Activated CD8-positive, alpha-beta T cell treated with anti-CD3 and anti-CD28 coated beads, Interleukin-2, amount 10 ng/mL, durations not matched to agents 7 days and 5 days (primary cell): ENCODE measurements at regions of chr11 and their contacts with region 1.

Region 1: DNA sequence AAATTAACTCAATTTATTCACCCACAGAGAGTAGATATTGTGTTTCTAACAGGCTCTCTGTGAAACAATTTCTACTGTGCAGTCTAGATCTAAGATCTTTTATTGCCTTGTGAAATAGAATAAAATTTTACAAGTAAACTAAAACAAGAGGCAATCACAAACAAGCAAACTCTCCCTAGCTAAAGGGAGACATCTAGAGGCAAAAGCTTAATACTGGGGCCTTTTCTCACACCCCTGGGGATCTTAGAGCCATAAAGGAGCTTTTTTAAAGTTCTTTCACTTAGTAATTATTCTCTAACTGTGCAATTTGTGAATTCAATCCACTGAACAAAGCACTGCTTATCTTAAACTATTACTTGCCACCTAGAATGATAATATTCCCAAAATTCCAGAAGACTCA is 19.7 kb downstream of the ALG9 start:
- DNase-seq: no peak
- ATAC-seq: no peak
- H3K4me3 Mint-ChIP-seq: no peak overlapping the region
- H3K27ac Mint-ChIP-seq: no peak overlapping the region
- H3K4me1 Mint-ChIP-seq: no peaks in the 10 kb centered on the region
- H3K27me3 Mint-ChIP-seq: no peaks in the 10 kb centered on the region

Region 2: DNA sequence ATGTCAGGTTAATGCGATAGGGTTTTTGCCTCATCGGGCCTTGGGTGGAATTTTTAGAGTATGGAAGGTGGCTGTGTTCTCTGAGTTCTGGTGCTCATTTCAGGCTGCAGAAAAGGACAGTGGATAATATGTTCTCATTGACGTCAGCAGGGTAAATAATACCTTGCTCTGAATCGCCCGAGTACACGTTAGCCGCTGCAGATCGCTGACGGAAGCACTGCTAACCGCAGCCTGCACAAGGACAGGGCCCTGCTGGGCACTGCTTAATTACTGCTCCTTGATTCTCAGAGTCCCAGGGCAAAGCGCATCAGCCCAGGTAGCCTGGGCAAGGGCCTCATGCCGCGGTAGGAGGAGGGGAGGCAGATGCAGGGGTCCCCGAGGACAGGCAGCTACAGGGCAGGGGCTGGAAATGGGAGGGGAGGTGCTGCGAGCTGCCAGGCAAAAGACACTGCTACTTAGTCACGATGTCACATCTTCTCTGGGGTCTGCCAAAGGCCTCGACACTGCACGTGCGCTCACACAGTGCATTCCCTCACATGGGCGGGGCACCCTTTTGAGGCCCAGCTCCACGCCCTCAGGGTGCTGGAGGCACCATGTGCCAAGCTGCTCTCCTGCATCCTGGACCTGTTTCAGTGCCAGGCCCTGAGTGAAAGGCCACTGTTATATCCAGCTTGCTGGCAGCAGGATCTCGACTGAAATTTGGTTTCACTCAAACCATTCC is 120.6 kb before region 1 on chr11:
- CTCF ChIA-PET with region 1: no interaction called
- POLR2A ChIA-PET with region 1: no interaction called
- DNase-seq: no peak
- ATAC-seq: no peak
- H3K4me3 Mint-ChIP-seq: no peak overlapping the region
- H3K27ac Mint-ChIP-seq: no peak overlapping the region
- H3K4me1 Mint-ChIP-seq: no peaks in the 10 kb centered on the region
- H3K27me3 Mint-ChIP-seq: no peaks in the 10 kb centered on the region

Region 3: GRCh38 chr11:111833524-111833923 is 18.1 kb before region 1 on chr11:
- CTCF ChIA-PET with region 1: no interaction called
- POLR2A ChIA-PET with region 1: no interaction called
- DNase-seq: no peak
- ATAC-seq: no peak
- H3K4me3 Mint-ChIP-seq: no peak overlapping the region
- H3K27ac Mint-ChIP-seq: no peak overlapping the region
- H3K4me1 Mint-ChIP-seq: peaks cover 17% of the 10 kb centered on the region
- H3K27me3 Mint-ChIP-seq: no peaks in the 10 kb centered on the region

Region 4: GRCh38 chr11:111870886-111871692 is 19.5 kb after region 1 on chr11 and contains the start of gene ALG9:
- CTCF ChIA-PET with region 1: interaction called, 13 read pairs
- POLR2A ChIA-PET with region 1: interaction called, 3 read pairs
- DNase-seq: peak; percentile 91
- ATAC-seq: peak; percentile 93
- H3K4me3 Mint-ChIP-seq: peak within 1 kb of the TSS; percentile 89
- H3K27ac Mint-ChIP-seq: peak within 1 kb of the TSS; percentile 90
- H3K4me1 Mint-ChIP-seq: peaks cover 23% of the 10 kb centered on the region
- H3K27me3 Mint-ChIP-seq: no peaks in the 10 kb centered on the region
- total RNA-seq, gene ALG9: 29.2 to 31.1 TPM

Region 5: DNA sequence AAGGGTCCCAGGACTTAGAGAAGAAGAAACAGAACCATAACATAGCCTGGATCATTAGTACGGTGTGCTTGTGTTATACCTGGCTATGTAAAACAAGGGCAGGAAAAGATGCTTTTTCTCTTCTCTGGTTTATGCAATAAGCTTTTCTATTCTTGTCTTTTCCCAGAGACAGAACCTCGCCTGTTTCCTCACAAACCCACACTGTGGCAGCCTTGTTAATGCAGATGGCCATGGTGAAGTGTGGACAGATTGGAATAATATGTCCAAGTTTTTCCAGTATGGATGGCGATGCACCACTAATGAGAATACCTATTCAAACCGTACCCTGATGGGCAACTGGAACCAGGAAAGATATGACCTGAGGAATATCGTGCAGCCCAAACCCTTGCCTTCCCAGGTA is 30.6 kb after region 1 on chr11:
- CTCF ChIA-PET with region 1: no interaction called
- POLR2A ChIA-PET with region 1: no interaction called
- DNase-seq: no peak
- ATAC-seq: no peak
- H3K4me3 Mint-ChIP-seq: no peak overlapping the region
- H3K27ac Mint-ChIP-seq: no peak overlapping the region
- H3K4me1 Mint-ChIP-seq: peaks cover 18% of the 10 kb centered on the region
- H3K27me3 Mint-ChIP-seq: no peaks in the 10 kb centered on the region